PC-9 (cell line): ENCODE measurements at regions of chr12 and their contacts with region 1.

Region 1: GRCh38 chr12:120495723-120496412 is at the start of gene DYNLL1:
- DNase-seq: peak; percentile 87 to 98
- H3K4me3 ChIP-seq: peak within 1 kb of the TSS; percentile 91
- H3K27ac ChIP-seq: peak within 1 kb of the TSS; percentile 21; the same call in 1 of the 2 replicates
- H3K4me1 ChIP-seq: peaks cover 23% of the 10 kb centered on the region
- H3K27me3 ChIP-seq: no peaks in the 10 kb centered on the region
- CTCF ChIP-seq: no peak
- total RNA-seq, gene DYNLL1: 251 and 340 TPM in 2 replicates

Region 2: GRCh38 chr12:120167529-120168095 is 328.3 kb before region 1 on chr12:
- CTCF ChIA-PET with region 1: interaction called, 11 read pairs
- POLR2A ChIA-PET with region 1: no interaction called
- intact Hi-C with region 1: no loop called
- DNase-seq: no peak
- H3K4me3 ChIP-seq: no peak overlapping the region
- H3K27ac ChIP-seq: no peak overlapping the region
- H3K4me1 ChIP-seq: no peaks in the 10 kb centered on the region
- H3K27me3 ChIP-seq: no peaks in the 10 kb centered on the region
- CTCF ChIP-seq: no peak

Region 3: DNA sequence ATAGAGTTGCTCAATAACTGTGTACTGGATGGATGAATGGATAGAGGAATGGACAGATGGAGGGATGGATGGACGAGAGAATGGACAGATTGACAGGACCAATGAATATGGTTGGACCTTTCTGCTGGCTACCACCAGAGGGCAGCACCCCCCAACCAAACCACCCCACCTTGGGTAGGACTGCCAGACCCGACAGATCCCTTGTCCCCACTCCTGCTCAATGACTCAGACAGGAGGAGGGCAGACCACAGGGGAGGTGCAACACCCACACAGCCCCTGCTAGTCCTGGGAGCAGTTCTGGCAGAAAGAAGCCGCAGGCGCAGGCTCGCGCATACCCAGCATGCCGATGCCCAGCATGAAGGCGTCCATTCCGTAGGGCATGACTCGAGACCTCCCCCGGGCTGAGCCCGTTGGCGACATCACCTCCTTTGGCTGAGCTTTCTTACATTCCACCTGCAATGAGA is 139.3 kb before region 1 on chr12:
- CTCF ChIA-PET with region 1: no interaction called
- POLR2A ChIA-PET with region 1: no interaction called
- intact Hi-C with region 1: loop called (anchors 2 kb)
- DNase-seq: peak; percentile 92 to 94
- H3K4me3 ChIP-seq: peak overlapping the region; percentile 22; the same call in 1 of the 2 replicates
- H3K27ac ChIP-seq: no peak overlapping the region
- H3K4me1 ChIP-seq: peaks cover 5% of the 10 kb centered on the region; the same call in 1 of the 2 replicates
- H3K27me3 ChIP-seq: no peaks in the 10 kb centered on the region
- CTCF ChIP-seq: peak; percentile 89

Region 4: GRCh38 chr12:120469450-120470149 is 26.3 kb before region 1 on chr12 and contains the start of gene SRSF9:
- CTCF ChIA-PET with region 1: interaction called, 5 read pairs
- POLR2A ChIA-PET with region 1: interaction called, 26 read pairs
- intact Hi-C with region 1: loop called (anchors 1 kb)
- DNase-seq: peak; percentile 82 to 94
- H3K4me3 ChIP-seq: peak within 1 kb of the TSS; percentile 77
- H3K27ac ChIP-seq: peak within 1 kb of the TSS; percentile 54
- H3K4me1 ChIP-seq: peaks cover 52% of the 10 kb centered on the region
- H3K27me3 ChIP-seq: no peaks in the 10 kb centered on the region
- CTCF ChIP-seq: peak; percentile 77
- total RNA-seq, gene SRSF9: 231 and 253 TPM in 2 replicates

Region 5: DNA sequence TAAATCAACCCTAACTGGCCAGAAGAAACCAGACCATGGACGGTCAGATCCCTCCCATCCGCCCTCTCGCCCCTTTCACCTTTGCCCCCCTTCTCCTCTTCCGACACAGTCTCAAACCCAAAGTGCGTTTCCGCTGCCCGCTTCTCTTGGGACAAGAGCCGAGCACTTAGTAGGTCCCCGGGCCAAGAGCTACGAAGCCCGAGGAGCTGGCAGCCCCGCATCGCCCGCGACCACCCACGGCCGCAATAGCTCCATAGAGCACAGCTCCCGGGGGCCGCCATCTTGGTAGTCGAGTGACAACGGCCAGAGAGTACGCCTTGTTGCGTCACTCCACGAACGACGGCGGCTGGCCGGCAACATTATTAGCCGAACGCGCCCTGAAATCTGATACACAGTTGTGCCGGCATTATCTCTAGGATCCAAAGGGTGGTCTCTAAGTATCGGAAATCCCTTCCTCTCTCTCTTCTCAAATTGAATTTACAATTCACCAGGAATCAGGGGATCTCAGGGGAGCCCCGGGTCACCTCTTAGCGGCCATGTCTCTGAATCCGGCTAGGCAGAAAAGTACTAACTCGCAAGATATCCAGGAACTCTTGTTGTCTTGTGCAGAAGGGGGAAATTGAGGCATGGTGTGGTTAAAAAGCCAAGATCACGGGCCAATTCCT is 33.1 kb after region 1 on chr12 and contains the start of gene COQ5:
- CTCF ChIA-PET with region 1: interaction called, 3 read pairs
- POLR2A ChIA-PET with region 1: no interaction called
- intact Hi-C with region 1: loop called (anchors 2 kb)
- DNase-seq: peak; percentile 50 to 77
- H3K4me3 ChIP-seq: peak within 1 kb of the TSS; percentile 80
- H3K27ac ChIP-seq: peak within 1 kb of the TSS; percentile 68
- H3K4me1 ChIP-seq: peaks cover 24% of the 10 kb centered on the region
- H3K27me3 ChIP-seq: no peaks in the 10 kb centered on the region
- CTCF ChIP-seq: no peak
- total RNA-seq, gene COQ5: 30.4 and 32.2 TPM in 2 replicates

Region 6: DNA sequence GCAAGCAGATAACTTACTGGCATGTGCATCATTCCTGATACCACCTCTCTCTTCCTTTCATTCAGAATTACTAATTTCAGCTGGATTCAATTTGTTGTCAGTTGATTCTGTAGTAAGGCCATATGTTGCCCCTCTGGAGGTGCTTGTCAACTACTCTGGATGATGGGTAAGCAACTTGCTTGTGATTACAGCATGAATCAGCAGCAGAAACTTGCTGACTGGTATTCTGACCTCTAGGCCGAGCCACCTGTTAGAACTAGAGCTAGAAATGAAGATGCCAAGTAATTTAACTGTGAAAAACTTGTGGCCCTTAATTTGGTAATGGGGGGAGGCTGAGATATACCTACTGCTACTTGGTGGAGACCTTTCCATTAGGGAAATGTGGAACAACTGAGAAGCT is 43.4 kb after region 1 on chr12:
- CTCF ChIA-PET with region 1: no interaction called
- POLR2A ChIA-PET with region 1: interaction called, 12 read pairs
- intact Hi-C with region 1: no loop called
- DNase-seq: no peak
- H3K4me3 ChIP-seq: no peak overlapping the region
- H3K27ac ChIP-seq: peak overlapping the region; percentile 47
- H3K4me1 ChIP-seq: peaks cover 44% of the 10 kb centered on the region
- H3K27me3 ChIP-seq: no peaks in the 10 kb centered on the region
- CTCF ChIP-seq: no peak

Region 7: GRCh38 chr12:120750806-120751205 is 254.9 kb after region 1 on chr12:
- CTCF ChIA-PET with region 1: interaction called, 13 read pairs
- POLR2A ChIA-PET with region 1: no interaction called
- intact Hi-C with region 1: no loop called
- DNase-seq: no peak
- H3K4me3 ChIP-seq: no peak overlapping the region
- H3K27ac ChIP-seq: no peak overlapping the region
- H3K4me1 ChIP-seq: no peaks in the 10 kb centered on the region
- H3K27me3 ChIP-seq: no peaks in the 10 kb centered on the region
- CTCF ChIP-seq: no peak